OCI-LY7 (cell line): ENCODE measurements at regions of chr15 and their contacts with region 1.

Region 1: DNA sequence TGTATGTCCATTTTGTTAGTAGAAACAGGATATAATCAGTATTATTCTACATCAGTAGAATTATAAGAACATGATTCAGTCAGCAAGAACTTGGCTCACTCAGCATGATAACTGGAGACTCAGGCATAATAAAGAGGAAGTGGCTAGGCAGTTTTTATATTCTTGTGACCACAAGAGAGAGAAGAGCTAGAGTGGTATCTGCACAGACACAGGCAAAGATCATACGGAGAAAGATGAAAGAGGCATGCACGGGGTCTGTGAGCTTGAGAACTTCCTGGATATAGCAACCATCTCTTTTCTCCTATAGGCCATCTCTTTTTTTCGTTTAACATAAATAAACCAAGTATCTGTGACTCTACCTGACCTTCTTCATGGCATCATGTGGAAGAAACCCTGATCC is 46.8 kb downstream of the MYO5A start:
- DNase-seq: peak; percentile 94
- H3K4me3 ChIP-seq: peak overlapping the region; percentile 55
- H3K27ac ChIP-seq: peak overlapping the region; percentile 93
- H3K4me1 ChIP-seq: peaks cover 57% of the 10 kb centered on the region
- CTCF ChIP-seq: no peak

Region 2: GRCh38 chr15:52406601-52407000 is 75.3 kb before region 1 on chr15:
- CTCF ChIA-PET with region 1: no interaction called
- POLR2A ChIA-PET with region 1: no interaction called
- intact Hi-C with region 1: no loop called
- DNase-seq: no peak
- H3K4me3 ChIP-seq: no peak overlapping the region
- H3K27ac ChIP-seq: no peak overlapping the region
- H3K4me1 ChIP-seq: no peaks in the 10 kb centered on the region
- CTCF ChIP-seq: no peak

Region 3: DNA sequence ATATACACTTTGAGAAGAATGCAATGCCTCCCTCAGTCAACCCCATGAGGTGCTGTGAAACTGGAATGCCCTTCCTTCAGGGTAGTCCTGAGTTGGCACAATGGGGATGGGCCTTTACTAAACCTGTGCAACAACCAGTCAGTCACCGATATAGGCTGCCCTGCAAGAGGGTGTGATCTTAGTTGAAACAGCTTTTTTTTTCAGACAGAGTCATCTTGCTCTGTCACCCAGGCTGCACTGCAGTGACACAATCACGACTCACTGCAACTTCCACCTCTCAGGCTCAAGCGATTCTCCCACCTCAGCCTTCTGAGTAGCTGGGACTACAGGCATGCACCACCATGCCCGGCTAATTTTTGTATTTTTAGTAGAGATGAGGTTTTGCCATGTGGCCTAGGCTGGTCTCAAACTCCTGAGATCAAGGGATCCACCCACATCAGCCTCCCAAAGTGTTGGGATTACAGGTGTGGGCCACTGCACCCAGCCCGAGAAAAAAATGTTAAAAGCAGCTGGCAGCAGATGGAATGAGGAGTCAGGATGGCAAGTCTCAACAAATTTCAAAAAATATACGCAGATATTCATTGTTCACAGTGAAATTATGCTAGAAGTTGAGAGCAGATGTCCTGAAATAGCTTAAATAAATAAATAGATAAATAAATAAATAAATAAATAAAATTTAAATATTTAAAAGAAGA is 15.0 kb after region 1 on chr15:
- CTCF ChIA-PET with region 1: no interaction called
- POLR2A ChIA-PET with region 1: interaction called, 19 read pairs
- intact Hi-C with region 1: no loop called
- DNase-seq: no peak
- H3K4me3 ChIP-seq: no peak overlapping the region
- H3K27ac ChIP-seq: peak overlapping the region; percentile 30
- H3K4me1 ChIP-seq: peaks cover 37% of the 10 kb centered on the region
- CTCF ChIP-seq: no peak

Region 4: GRCh38 chr15:52503788-52504496 is 22.0 kb after region 1 on chr15:
- CTCF ChIA-PET with region 1: no interaction called
- POLR2A ChIA-PET with region 1: interaction called, 9 read pairs
- intact Hi-C with region 1: loop called (anchors 2 kb)
- DNase-seq: peak; percentile 92
- H3K4me3 ChIP-seq: peak overlapping the region; percentile 55
- H3K27ac ChIP-seq: peak overlapping the region; percentile 94
- H3K4me1 ChIP-seq: peaks cover 70% of the 10 kb centered on the region
- CTCF ChIP-seq: no peak

Region 5: DNA sequence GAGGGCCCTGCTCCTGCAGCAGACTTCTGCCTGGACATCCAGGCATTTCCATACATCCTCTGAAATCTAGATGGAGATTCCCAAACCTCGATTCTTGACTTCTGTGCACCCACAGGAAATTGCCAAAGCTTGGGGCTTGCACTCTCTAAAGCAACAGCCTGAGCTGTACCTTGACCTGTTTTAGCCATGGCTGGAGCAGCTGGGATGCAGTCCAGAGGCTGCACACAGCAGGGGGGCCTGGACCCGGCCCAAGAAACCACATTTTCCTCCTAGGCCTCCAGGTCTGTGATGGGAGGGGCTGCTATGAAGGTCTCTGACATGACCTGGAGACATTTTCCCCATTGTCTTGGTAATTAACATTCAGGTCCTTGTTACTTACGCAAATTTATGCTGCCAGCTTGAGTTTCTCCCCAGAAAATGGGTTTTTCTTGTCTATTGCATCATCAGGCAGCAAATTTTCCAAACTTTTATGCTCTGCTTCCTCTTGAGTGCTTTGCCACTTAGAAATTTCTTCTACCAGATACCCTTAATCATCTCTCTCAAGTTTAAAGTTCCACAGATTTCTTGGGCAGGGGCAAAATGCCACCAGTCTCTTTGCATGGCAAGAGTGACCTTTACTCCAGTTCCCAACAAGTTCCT is 58.6 kb after region 1 on chr15:
- CTCF ChIA-PET with region 1: no interaction called
- POLR2A ChIA-PET with region 1: no interaction called
- intact Hi-C with region 1: no loop called
- DNase-seq: no peak
- H3K4me3 ChIP-seq: no peak overlapping the region
- H3K27ac ChIP-seq: no peak overlapping the region
- H3K4me1 ChIP-seq: no peaks in the 10 kb centered on the region
- CTCF ChIP-seq: no peak

Region 6: GRCh38 chr15:52636459-52636858 is 154.5 kb after region 1 on chr15:
- CTCF ChIA-PET with region 1: no interaction called
- POLR2A ChIA-PET with region 1: no interaction called
- intact Hi-C with region 1: no loop called
- DNase-seq: no peak
- H3K4me3 ChIP-seq: no peak overlapping the region
- H3K27ac ChIP-seq: no peak overlapping the region
- H3K4me1 ChIP-seq: no peaks in the 10 kb centered on the region
- CTCF ChIP-seq: no peak